ENCODE measurements at regions of chr18 and their contacts with region 1.

Region 1: DNA sequence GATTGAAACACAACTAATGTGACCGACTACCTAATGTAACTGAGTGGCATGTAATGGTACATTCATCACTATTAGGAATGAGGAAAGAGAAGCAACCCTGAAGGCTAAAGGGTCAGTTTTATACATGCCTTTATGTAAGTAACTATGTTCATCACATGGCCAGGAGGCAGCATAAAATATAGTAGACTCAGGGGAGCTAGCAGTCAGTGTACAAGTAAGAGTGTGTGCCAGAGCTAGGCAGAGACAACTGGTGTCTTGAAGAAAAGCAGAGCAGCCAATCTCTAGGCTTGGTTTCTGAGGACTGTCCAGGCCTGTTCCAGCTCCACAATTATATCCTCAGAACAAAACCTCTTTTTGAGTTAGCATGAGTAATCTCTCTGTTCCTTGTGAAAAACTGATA is 18.1 kb downstream of the SMAD2 start:
- DNase-seq: peak; percentile 41
- H3K4me3 Mint-ChIP-seq: no peak overlapping the region
- H3K27ac Mint-ChIP-seq: peak overlapping the region; percentile 59
- H3K4me1 Mint-ChIP-seq: peaks cover 84% of the 10 kb centered on the region
- H3K27me3 Mint-ChIP-seq: no peaks in the 10 kb centered on the region

Region 2: GRCh38 chr18:47883771-47884413 is 28.5 kb before region 1 on chr18:
- CTCF ChIA-PET with region 1: interaction called, 3 read pairs
- intact Hi-C with region 1: loop called (anchors 2 kb)
- DNase-seq: peak; percentile 73
- H3K4me3 Mint-ChIP-seq: no peak overlapping the region
- H3K27ac Mint-ChIP-seq: peak overlapping the region; percentile 27
- H3K4me1 Mint-ChIP-seq: peaks cover 28% of the 10 kb centered on the region
- H3K27me3 Mint-ChIP-seq: no peaks in the 10 kb centered on the region

Region 3: DNA sequence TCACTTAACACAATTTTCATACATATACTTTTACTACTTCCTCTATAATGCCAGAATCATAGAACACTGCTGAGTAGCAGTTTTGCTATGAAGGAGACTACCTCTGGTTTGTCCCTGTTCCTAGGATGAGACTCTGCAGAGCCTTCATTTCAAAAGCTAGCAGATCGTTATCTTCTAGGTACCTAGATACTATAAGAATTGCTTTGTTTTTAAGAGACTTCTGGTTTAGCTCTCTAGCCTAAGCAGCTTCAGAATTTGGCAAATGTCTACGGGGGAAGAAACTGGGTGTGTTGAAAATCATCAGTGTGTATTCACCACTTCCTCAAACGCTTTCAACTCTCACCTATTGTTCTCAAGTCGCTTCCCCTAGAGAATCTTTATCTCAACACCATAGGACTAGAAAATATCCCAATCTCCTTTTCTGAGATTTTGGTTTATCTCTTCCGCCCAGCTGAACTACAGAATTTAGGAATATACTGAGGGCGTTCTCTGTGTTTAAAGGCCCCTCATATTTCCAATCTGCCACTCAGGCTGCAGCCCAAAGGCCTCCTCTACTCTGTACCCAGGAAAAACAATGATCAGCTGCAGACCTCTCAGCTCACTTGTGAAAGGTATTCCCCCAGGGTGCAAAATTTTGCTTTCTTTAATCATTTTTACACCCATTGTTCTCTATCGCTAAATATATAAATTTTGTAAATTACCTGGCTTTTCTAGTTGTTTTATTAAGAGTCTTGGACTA is 10.6 kb before region 1 on chr18:
- CTCF ChIA-PET with region 1: interaction called, 3 read pairs
- intact Hi-C with region 1: loop called (anchors 1 kb)
- DNase-seq: no peak
- H3K4me3 Mint-ChIP-seq: peak overlapping the region; percentile 19
- H3K27ac Mint-ChIP-seq: peak overlapping the region; percentile 67
- H3K4me1 Mint-ChIP-seq: peaks cover 74% of the 10 kb centered on the region
- H3K27me3 Mint-ChIP-seq: no peaks in the 10 kb centered on the region

Measured in activated naive CD4-positive, alpha-beta T cell treated with anti-CD3 and anti-CD28 coated beads for 36 hours (primary cell).